Breast epithelium (tissue), 4 donors: ENCODE measurements at regions of chr6 and their contacts with region 1.

Region 1: DNA sequence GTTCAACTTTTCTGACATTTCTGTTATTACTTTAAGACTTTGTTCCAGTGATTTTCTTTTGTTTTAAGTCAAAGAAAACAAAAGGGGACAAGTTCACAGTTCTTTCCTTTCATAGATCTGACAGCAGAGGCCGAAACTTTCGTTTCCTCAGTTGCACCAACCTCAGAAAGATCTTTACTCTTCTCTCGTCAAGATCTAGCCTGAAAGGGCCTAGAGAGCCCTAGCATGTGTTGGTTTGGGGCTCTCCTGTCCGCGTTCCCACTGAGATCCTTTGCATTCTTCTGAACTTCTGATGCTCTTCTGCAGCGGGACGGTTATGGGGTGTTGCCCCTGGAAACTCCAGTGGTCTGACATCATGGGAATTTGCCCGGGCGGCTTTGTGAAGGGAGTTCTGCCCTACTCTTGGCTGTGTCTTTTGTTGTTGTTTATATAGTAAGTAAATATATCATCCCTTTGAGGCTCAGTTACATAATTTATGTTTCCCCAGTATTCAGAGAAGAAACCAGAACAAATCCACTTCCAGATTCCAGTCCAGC is 129.1 kb downstream of the SASH1 start:
- DNase-seq: no peak
- H3K4me3 ChIP-seq: no peak overlapping the region
- H3K27ac ChIP-seq: peak overlapping the region in 1 of 2 donors; percentile 10
- H3K4me1 ChIP-seq: no peaks in the 10 kb centered on the region
- H3K27me3 ChIP-seq: no peaks in the 10 kb centered on the region
- CTCF ChIP-seq: no peak
- POLR2A ChIP-seq: no peak

Region 2: GRCh38 chr6:147227770-147228320 is 1243.8 kb before region 1 on chr6:
- intact Hi-C with region 1: loop called (anchors 5 kb)
- DNase-seq: no peak
- H3K4me3 ChIP-seq: no peak overlapping the region
- H3K27ac ChIP-seq: no peak overlapping the region
- H3K4me1 ChIP-seq: no peaks in the 10 kb centered on the region
- H3K27me3 ChIP-seq: no peaks in the 10 kb centered on the region
- CTCF ChIP-seq: no peak
- POLR2A ChIP-seq: no peak

Region 3: DNA sequence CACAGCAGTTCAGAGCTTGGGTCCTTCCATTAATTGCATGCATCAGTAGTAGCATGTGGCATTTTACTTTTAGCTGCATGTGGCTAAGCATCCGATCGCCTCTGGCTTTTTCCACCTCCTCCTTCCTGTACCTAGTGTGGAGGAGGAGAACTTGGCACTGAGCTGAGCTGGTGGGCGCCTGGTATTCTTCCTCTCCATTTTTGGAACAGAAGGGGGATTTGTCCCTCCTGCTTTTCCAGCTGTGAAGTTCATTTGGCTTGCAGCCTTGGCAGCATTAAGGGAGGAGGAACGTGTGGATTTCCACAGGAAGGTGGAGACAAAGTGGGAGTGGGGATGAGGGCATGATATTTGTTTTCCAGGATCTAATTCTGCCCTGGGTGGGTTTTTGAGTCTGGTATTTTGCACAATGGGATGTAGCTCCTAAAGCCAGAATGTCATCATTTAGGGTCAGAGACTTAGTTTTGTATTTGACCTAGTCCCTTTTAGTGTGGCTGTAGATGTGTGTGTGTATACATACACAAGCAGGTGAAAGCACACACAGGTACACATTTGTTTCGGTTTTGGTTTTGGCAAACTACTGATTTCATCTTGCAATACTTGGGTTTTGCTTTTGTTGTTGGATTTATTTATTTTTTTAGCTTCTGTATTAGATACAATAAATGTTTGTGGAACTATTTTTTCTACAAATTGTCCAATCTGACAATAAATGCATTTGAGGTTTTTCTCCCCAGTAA is 39.1 kb before region 1 on chr6:
- intact Hi-C with region 1: no loop called
- DNase-seq: peak in 1 of 2 donors; percentile 67
- H3K4me3 ChIP-seq: peak overlapping the region in 2 of 3 donors; percentile 20 to 26
- H3K27ac ChIP-seq: peak overlapping the region; percentile 50 to 73
- H3K4me1 ChIP-seq: peaks cover 0 to 5% of the 10 kb centered on the region in 2 donors
- H3K27me3 ChIP-seq: no peaks in the 10 kb centered on the region
- CTCF ChIP-seq: no peak
- POLR2A ChIP-seq: no peak

Region 4: GRCh38 chr6:148487461-148487860 is 15.8 kb after region 1 on chr6:
- intact Hi-C with region 1: no loop called
- DNase-seq: no peak
- H3K4me3 ChIP-seq: no peak overlapping the region
- H3K27ac ChIP-seq: no peak overlapping the region
- H3K4me1 ChIP-seq: no peaks in the 10 kb centered on the region
- H3K27me3 ChIP-seq: no peaks in the 10 kb centered on the region
- CTCF ChIP-seq: no peak
- POLR2A ChIP-seq: no peak